MCF 10A (cell line): ENCODE measurements at regions of chr15 and their contacts with region 1.

Region 1: DNA sequence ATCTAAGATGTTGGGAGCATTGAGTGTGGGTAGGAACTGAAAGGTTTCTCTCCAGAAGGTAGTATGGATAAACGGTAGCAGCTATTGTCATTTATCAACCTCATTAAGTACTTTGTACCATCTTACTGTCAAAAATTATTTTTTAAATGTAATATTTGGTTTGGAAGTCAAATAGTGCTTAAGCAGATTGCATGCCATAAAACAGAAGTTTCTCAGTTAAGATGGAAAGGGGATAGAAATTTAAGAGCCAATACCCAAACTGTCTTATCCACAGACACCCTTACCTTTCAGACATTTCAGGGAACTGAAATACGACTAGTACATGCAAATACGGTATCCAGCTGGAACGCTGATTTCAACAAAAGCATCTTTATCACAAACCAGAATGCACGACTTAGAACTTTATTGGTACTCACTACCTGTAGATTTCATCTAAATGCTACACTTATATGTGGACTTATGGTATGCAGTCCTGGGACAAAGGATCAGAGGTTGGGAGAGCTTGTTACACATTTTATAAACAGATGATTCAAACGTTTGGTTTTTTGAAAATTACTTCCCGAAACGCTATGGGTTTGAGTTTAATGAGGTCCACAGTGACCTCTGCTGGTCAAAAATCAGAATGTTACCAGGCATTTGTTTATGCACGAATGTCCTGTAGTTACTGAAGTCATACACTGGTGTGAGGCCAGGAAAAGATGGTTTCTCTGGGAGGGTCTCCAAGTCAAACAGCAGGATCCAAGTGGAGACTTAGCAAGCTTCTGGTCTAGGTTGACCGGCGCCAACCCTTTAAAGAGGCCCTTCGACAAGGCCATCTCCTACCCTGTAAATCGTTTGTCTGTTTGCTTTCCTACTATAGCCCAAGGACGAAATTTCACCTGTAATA is 45.7 kb upstream of the DUT start:
- DNase-seq: peak; percentile 77
- H3K4me3 Mint-ChIP-seq: peak overlapping the region; percentile 58
- H3K27ac Mint-ChIP-seq: peak overlapping the region; percentile 31
- H3K4me1 Mint-ChIP-seq: no peaks in the 10 kb centered on the region
- H3K27me3 Mint-ChIP-seq: no peaks in the 10 kb centered on the region
- CTCF ChIP-seq: peak; percentile 53

Region 2: DNA sequence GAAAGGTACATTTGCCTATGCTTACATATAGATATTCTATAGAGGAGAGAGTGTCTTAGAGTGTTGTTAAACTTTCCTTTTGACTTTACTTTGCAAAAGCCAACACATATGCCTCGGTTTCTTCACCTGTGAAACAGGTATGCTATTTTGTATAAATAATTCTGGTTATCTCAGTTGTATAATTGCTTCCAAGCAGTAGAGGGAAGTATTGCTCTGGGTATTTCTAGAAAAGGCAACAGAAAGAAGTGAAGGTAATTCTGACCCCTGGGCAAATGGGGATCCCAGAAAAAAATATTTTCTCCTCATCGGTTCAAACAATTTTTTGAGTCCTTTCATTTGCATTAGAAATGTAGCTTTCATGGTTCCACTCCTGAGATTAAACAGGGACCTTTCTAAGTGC is 784.7 kb before region 1 on chr15:
- CTCF ChIA-PET with region 1: interaction called, 10 read pairs
- POLR2A ChIA-PET with region 1: no interaction called
- intact Hi-C with region 1: no loop called
- DNase-seq: no peak
- H3K4me3 Mint-ChIP-seq: no peak overlapping the region
- H3K27ac Mint-ChIP-seq: no peak overlapping the region
- H3K4me1 Mint-ChIP-seq: no peaks in the 10 kb centered on the region
- H3K27me3 Mint-ChIP-seq: no peaks in the 10 kb centered on the region
- CTCF ChIP-seq: peak; percentile 31

Region 3: DNA sequence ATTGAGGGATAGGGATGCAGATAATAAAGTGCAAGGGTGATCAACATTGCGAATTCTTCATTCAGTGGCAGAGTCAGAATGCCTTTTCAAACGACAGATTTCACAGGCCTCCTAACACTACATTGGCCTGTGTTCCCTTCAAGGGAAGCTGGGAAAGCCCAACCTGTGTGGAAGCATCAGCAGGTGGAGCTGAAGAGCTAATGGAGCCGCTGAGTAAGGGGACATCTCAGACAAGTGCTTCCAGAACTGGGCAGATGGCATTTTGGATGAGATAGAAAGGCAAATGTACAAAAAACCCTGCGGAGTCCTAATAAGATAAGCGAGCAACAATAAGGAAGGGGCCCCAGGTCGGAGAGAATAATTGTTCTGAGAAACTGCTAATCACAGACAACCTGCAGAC is 173.3 kb before region 1 on chr15:
- CTCF ChIA-PET with region 1: interaction called, 11 read pairs
- POLR2A ChIA-PET with region 1: no interaction called
- intact Hi-C with region 1: loop called (anchors 2 kb)
- DNase-seq: peak; percentile 46
- H3K4me3 Mint-ChIP-seq: no peak overlapping the region
- H3K27ac Mint-ChIP-seq: no peak overlapping the region
- H3K4me1 Mint-ChIP-seq: no peaks in the 10 kb centered on the region
- H3K27me3 Mint-ChIP-seq: peaks cover 24% of the 10 kb centered on the region
- CTCF ChIP-seq: peak; percentile 48

Region 4: DNA sequence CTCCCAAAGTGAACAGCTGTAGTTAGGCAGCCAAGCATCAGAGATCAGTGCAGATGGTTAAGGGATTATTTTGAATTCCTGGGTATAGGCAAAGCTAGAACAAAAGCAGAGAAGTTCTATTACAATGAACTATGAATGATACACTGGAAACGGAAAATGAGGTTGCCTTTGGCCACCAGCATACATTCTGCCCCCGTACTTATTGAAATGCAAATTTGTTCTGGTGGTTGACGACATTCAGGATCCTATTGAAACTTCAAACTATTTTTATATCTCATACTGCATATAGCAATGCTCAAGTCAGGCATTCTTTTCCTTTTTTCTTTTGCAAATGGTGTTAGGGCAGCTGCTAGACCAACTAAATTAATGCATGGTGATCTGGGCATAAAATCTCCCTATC is 17.8 kb before region 1 on chr15:
- CTCF ChIA-PET with region 1: interaction called, 13 read pairs
- POLR2A ChIA-PET with region 1: no interaction called
- intact Hi-C with region 1: no loop called
- DNase-seq: no peak
- H3K4me3 Mint-ChIP-seq: no peak overlapping the region
- H3K27ac Mint-ChIP-seq: no peak overlapping the region
- H3K4me1 Mint-ChIP-seq: no peaks in the 10 kb centered on the region
- H3K27me3 Mint-ChIP-seq: no peaks in the 10 kb centered on the region
- CTCF ChIP-seq: no peak

Region 5: GRCh38 chr15:48352474-48353072 is 67.0 kb after region 1 on chr15:
- CTCF ChIA-PET with region 1: interaction called, 7 read pairs
- POLR2A ChIA-PET with region 1: no interaction called
- intact Hi-C with region 1: loop called (anchors 2 kb)
- DNase-seq: peak; percentile 83
- H3K4me3 Mint-ChIP-seq: no peak overlapping the region
- H3K27ac Mint-ChIP-seq: no peak overlapping the region
- H3K4me1 Mint-ChIP-seq: peaks cover 11% of the 10 kb centered on the region
- H3K27me3 Mint-ChIP-seq: no peaks in the 10 kb centered on the region
- CTCF ChIP-seq: peak; percentile 73